ENCODE measurements at regions of chr22 and their contacts with region 1.

Region 1: DNA sequence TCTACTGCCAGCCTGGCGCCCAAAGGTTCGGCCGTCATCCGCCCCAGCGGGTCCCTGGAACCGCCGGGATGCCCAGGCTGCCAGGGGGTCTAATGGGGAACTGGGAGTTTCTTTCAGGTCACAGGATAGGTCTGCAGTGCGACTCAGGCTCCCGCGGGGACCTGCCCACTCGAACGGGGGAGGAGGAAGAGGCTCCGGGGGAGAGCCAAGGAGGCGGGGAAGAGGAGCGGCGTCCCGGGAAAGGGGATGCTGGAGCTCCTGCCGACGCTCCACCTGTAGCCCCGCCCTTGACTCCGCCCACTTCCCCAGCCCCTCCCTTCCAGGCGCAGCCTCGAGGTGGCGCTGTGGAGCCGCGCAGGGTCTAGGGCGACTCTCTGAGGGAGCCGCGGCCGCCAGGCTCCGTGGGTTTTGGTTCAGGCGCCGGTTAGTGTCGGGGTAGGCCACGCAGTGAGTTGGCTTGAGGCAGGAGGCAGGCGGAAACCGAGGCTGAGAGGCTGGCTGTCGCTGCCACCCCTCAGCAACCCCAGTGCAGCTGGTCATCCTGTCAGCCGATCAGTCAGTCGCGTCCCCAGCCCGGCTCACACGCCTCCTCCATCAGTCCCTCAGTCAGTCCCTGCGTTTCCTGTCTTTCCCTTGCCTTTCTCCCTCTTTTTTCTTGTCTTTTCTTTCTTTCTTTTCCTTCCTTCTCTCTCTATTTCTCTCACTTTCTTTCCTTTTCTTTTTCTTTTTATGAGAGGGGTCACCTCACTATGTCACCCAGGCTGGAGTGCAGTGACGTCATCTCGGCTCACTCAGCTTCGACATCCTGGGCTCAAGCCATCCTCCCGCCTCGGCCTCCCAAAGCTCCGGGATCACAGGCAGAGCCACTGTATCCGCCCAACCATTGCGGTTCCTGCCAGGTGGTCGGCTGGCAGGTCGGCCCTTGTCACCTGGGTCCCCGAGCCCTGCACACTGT is 26.4 kb downstream of the YWHAH start:
- DNase-seq: peak; percentile 99

Region 2: DNA sequence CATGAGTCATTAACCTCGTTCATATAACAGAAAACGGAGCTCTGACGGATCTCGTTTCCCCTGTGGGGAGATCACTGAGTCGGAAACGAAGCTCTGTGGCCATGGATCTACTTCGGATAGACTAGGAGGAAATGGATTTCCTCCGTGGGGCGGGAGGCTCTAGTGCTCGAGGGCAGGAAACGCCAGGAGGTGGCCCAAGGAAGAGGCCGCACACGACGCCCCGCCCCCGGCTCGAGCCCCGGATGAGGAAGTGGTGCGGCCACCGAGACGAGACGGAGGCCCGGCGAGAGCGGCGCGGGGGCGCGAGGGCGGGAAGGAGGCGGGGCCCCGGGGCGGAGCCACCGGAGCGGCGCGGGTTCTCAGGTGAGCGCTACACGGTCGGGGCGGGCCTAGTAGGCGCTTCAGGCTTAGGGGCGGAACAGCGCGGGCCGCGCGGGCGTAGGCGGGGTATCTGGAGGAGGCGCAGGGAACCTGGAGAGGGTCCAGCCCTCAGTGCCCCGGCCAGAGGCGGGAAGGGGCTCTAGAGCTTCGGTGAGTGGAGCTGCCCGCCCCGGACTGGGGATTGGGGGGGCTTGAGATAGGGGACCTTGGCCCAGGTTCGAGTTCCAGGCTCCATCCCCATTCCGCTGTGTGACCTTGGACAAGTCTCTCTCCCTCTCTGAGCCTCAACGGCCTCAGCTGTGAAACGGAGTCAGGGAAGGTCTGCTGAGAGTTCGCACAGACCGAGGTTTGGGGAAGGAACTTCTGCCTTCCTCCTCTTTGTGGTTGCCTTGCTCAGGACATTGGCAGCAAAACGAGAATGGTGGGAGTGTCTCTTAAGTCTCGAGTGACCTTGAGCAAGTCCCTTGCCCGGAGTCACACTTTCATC is 216.9 kb before region 1 on chr22 and contains the start of gene DEPDC5:
- CTCF ChIA-PET with region 1: interaction called, 11 read pairs
- POLR2A ChIA-PET with region 1: interaction called, 6 read pairs
- DNase-seq: peak; percentile 99

Region 3: DNA sequence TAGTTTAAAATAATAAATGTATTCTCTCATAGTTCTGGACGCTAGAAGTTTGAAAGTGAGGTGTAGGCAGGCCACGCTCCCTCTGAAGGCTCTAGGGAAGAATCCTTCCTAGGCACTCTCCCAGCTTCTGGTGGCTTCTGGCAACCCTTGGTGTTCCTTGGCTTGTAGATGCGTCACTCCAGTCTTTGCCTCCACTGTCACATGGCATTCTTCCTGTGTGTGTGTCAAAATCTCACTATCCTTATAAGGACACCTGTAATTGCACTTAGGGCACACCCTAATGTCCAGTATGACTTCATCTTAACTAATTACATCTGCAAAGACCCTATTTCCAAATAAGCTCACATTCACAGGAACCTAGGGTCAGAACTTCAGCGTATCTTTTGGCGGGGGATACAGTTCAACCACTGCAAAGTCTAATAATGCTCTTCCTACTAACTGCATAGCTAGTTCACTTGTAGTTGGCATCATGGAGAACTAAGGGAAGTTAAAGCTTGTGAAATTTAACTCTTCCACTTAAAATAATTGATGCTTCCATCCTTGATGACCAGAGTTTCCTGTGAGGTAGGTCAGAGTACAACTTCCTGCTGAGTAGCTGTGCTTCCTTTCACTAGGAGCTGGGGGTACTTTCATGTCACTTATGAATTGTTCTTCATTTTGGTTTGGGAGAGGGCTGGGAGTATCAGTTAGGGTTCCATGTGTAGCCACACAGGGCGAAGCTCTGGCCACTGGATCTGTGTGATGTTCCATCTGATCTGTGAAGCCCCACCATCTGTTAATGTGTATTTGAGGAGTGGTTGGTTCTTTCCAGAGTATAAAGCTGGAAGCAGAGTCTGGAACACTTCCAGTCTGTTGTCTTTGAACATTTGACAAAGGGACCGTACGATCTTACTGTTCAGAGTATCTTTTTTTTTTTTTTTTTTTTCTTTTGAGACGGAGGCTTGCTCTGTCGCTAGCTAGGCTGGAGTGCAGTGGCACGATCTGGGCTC is 15.9 kb before region 1 on chr22:
- CTCF ChIA-PET with region 1: interaction called, 32 read pairs
- POLR2A ChIA-PET with region 1: interaction called, 5 read pairs
- DNase-seq: no peak

Region 4: DNA sequence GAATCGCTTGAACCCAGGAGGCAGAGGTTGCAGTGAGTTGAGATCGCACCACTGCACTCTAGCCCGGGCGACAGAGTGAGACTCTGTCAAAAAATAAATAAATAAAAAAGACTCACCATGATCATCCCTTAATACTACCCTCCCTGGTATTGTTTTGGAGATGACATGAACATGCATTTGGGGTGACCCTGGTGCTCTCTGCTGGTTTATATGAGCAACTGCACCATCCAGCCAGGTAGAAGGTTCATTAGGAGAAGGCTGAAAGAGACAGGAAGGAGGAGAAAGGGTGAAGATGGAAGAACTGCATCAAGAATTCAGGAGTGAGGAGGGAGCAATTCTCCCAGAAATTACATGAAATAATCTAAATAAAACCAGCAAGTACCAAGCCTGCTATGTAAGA is 110.1 kb after region 1 on chr22:
- CTCF ChIA-PET with region 1: interaction called, 12 read pairs
- POLR2A ChIA-PET with region 1: interaction called, 4 read pairs
- DNase-seq: peak; percentile 71

Region 5: GRCh38 chr22:32265882-32266767 is 295.4 kb after region 1 on chr22:
- CTCF ChIA-PET with region 1: interaction called, 12 read pairs
- POLR2A ChIA-PET with region 1: no interaction called
- DNase-seq: peak; percentile 82

Measured in HEK293T (cell line).